OCI-LY7 (cell line): ENCODE measurements at regions of chr13 and their contacts with region 1.

Region 1: GRCh38 chr13:30802953-30803478 is 67.7 kb downstream of the ALOX5AP start:
- DNase-seq: peak; percentile 82
- H3K4me3 ChIP-seq: no peak overlapping the region
- H3K27ac ChIP-seq: no peak overlapping the region
- H3K4me1 ChIP-seq: no peaks in the 10 kb centered on the region
- CTCF ChIP-seq: peak; percentile 94

Region 2: GRCh38 chr13:30355384-30355699 is 447.7 kb before region 1 on chr13:
- CTCF ChIA-PET with region 1: no interaction called
- POLR2A ChIA-PET with region 1: no interaction called
- intact Hi-C with region 1: loop called (anchors 10 kb)
- DNase-seq: peak; percentile 84
- H3K4me3 ChIP-seq: peak overlapping the region; percentile 42
- H3K27ac ChIP-seq: peak overlapping the region; percentile 83
- H3K4me1 ChIP-seq: peaks cover 50% of the 10 kb centered on the region
- CTCF ChIP-seq: peak; percentile 91

Region 3: DNA sequence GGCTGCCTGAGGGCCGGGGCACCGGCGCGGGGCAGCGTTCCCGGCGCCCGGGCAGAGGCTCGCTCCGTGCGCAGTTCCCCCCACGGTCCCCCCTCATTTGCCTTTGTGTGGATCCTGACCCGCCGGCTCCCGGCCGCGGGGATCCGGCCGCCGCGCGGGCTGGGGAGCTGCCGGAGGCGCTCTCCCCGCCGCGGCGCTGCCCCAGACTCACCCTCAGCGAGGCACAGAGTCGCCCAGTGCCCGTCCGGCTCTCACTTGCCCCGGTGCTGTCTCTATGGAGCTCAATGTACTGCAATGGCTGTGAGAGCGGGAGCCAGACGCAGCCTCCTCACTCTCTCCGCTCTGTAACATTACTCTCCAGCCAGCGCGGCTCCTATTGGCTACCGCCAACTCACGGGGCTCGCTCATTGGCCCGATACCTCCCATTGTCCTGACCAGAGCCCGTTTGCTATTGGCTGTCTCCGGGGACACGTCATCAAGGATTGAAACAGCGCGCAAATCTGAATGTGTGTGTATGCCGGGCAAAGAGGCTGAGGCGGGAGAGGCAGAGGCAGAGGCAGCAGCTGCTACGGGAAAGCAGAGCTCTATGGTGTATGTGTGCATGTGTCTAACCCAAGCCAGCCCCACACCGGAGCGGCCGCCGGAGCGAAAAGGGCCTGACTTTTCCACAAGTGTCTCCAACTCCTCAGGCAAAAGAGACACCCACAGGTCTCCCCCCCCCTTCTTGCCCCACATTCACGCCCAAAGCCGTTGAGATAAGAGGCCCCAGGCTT is 337.2 kb before region 1 on chr13 and contains the start of gene HMGB1:
- CTCF ChIA-PET with region 1: no interaction called
- POLR2A ChIA-PET with region 1: no interaction called
- intact Hi-C with region 1: loop called (anchors 10 kb)
- DNase-seq: peak; percentile 100
- H3K4me3 ChIP-seq: peak within 1 kb of the TSS; percentile 99
- H3K27ac ChIP-seq: peak within 1 kb of the TSS; percentile 93
- H3K4me1 ChIP-seq: peaks cover 44% of the 10 kb centered on the region
- CTCF ChIP-seq: no peak
- total RNA-seq, gene HMGB1: 1,288 and 1,675 TPM in 2 replicates

Region 4: DNA sequence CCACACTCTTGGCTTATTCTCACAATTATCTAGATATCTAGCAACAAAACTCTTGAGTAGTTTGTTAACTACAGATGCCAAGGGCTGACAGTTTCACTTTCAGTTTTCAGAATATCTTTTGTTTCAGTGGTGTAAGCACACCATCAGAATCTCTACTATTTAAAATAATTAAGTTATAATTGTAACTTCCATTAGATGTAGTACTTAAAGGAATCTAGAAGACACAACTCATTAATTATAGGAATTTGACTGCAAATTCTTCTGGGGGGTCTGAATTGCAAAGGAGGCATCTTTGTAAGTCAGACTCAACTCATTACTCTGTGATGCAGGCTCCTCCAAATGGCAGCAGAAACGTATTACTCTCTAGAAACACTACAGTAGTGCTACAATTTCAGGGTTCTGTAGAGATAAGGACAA is 230.1 kb before region 1 on chr13:
- CTCF ChIA-PET with region 1: no interaction called
- POLR2A ChIA-PET with region 1: no interaction called
- intact Hi-C with region 1: loop called (anchors 5 kb)
- DNase-seq: peak; percentile 80
- H3K4me3 ChIP-seq: peak overlapping the region; percentile 60
- H3K27ac ChIP-seq: peak overlapping the region; percentile 46
- H3K4me1 ChIP-seq: peaks cover 29% of the 10 kb centered on the region
- CTCF ChIP-seq: peak; percentile 88

Region 5: DNA sequence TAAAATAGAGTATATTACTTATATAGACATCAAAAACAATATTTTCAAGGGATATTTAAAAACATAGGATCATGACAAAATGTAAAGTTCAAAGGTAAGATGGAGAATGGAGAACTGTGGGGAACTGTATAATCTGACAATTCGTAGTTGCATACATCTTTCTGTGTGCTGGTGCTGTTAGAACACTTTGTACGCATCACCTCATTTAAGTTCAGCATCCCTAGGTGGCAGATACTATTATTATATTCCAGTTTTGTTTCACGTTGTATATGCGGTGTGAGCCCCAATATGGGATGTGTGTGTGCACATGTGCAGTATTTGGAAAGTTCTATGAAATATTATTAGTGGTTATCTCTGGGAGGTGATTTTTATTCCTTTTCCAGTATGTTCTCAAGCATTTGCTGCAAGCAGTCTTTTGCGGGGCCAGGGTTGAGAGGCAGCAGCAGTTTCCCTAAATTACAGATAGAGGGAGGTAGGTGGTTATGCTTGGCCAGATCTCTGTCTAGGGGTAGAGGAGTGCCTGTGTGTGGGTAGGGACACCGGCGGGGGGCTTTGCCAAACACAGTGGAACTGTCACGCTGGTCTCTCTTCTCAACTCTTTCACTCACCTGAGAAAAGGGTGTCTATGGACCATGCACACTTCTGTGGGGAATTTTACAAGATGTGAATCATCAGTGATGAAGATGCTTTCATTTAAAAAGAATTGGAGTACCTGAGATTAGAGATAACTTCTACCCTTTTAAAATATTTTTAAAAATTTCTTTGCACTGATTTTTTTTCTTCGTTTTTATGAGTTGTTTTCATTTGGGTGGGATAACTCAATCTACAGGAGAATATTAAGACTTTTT is 123.3 kb before region 1 on chr13:
- CTCF ChIA-PET with region 1: no interaction called
- POLR2A ChIA-PET with region 1: no interaction called
- intact Hi-C with region 1: loop called (anchors 1 kb)
- DNase-seq: peak; percentile 69
- H3K4me3 ChIP-seq: no peak overlapping the region
- H3K27ac ChIP-seq: no peak overlapping the region
- H3K4me1 ChIP-seq: peaks cover 4% of the 10 kb centered on the region
- CTCF ChIP-seq: peak; percentile 88

Region 6: DNA sequence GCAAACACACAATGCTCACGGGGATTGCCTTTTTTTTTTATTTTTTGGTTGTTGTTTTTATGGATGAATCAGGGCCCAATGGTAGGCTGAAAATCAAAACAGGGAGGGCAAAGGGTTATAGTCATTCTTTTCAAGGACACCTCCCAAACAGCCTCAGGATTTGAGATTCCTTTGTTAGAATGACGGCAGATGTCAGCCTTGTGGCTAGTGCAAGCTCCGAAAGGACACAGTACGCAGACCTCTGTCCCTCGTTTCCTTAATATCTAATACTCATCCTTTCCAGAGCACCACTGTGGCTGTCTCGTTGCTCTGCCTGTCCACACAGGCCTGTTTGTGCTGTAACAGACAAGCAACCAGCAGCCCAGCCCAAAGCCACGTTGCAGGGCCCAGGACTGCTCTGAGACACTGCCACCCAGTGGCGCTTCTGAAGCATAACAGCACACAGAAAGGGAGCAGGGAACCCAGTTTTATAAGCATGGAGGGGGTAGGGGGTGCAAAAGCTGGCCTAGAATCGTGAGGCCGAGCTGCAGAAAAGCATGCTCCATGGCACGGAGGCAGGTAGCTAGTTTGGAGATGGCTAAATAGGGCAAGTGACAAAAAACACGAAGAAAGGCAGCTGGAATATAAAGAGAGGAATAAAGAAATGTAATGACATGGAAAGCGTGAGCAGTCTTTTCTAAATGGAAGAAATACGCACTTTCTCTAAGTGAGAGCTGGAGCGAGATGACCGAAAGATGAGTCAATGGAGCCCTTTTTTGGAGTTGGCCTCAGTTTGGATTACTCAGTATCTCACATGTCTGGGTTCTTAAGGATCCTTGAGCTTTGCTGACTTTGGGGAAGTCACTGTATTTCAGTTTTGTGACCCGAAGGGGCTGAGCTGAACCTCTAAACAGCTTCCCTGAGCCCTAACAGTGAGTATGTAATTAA is 62.4 kb after region 1 on chr13:
- CTCF ChIA-PET with region 1: no interaction called
- POLR2A ChIA-PET with region 1: no interaction called
- intact Hi-C with region 1: loop called (anchors 5 kb)
- DNase-seq: peak; percentile 78
- H3K4me3 ChIP-seq: no peak overlapping the region
- H3K27ac ChIP-seq: no peak overlapping the region
- H3K4me1 ChIP-seq: no peaks in the 10 kb centered on the region
- CTCF ChIP-seq: peak; percentile 96

Region 7: GRCh38 chr13:31044377-31045285 is 241.6 kb after region 1 on chr13:
- CTCF ChIA-PET with region 1: no interaction called
- POLR2A ChIA-PET with region 1: no interaction called
- intact Hi-C with region 1: loop called (anchors 5 kb)
- DNase-seq: peak; percentile 84
- H3K4me3 ChIP-seq: no peak overlapping the region
- H3K27ac ChIP-seq: no peak overlapping the region
- H3K4me1 ChIP-seq: peaks cover 12% of the 10 kb centered on the region
- CTCF ChIP-seq: peak; percentile 98